Spleen (tissue), 13 donors: ENCODE measurements at regions of chr22 and their contacts with region 1.

Region 1: GRCh38 chr22:37199103-37199759 is 11.2 kb upstream of the C1QTNF6 start:
- DNase-seq: peak; percentile 100
- H3K4me3 ChIP-seq: peak overlapping the region; percentile 50 to 88 (median 58)
- H3K27ac ChIP-seq: peak overlapping the region; percentile 91 to 98 (median 96)
- H3K4me1 ChIP-seq: peaks cover 20 to 69% (median 50%) of the 10 kb centered on the region in 6 donors
- H3K27me3 ChIP-seq: no peaks in the 10 kb centered on the region
- CTCF ChIP-seq: peak; percentile 95 to 99 (median 98)
- POLR2A ChIP-seq: peak; percentile 44 to 97 (median 96)

Region 2: DNA sequence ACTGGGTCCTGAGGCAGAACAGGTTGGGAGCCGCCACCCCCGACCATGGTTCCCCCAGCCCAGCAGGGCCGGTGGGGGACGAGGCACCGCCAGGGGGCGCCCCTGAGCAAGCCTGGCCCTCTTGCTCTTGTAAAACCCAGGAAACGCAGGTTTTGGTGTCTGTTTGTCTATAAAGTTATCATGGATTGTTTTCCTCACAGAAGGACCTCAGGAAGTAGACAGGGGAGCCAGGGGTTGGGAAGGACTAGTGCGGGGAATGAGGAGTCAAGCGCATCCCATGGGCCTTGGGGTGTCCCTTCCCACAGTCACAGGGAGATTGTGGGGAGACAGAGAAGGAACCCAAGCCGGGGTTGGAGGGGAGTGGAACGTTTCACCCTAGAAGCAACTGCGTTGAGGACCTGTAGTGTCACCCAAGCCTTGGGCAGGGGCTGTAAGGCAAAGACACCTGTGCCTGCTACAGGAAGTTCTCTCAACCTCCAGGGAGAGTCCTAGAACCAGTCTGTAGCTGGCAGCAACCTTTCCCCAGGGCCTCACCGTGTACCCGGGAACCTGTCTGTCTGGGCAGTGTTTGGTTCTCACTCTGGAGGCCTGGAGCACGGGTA is 121.2 kb before region 1 on chr22:
- intact Hi-C with region 1: loop called (anchors 2 kb)
- DNase-seq: peak; percentile 93
- H3K4me3 ChIP-seq: no peak overlapping the region
- H3K27ac ChIP-seq: no peak overlapping the region
- H3K4me1 ChIP-seq: peaks cover 11 to 28% (median 23%) of the 10 kb centered on the region in 6 donors
- H3K27me3 ChIP-seq: peaks cover 0 to 45% (median 0%) of the 10 kb centered on the region in 7 donors
- CTCF ChIP-seq: peak; percentile 70 to 97 (median 94)
- POLR2A ChIP-seq: no peak

Region 3: GRCh38 chr22:37166675-37167066 is 32.6 kb before region 1 on chr22:
- intact Hi-C with region 1: loop called (anchors 2 kb)
- DNase-seq: peak; percentile 96
- H3K4me3 ChIP-seq: peak overlapping the region in 4 of 8 donors; percentile 17 to 61 (median 19)
- H3K27ac ChIP-seq: peak overlapping the region; percentile 1 to 87 (median 68)
- H3K4me1 ChIP-seq: peaks cover 13 to 88% (median 64%) of the 10 kb centered on the region in 6 donors
- H3K27me3 ChIP-seq: no peaks in the 10 kb centered on the region
- CTCF ChIP-seq: peak in 9 of 11 experiments; percentile 87 to 95 (median 93)
- POLR2A ChIP-seq: no peak

Region 4: GRCh38 chr22:37259540-37260029 is 60.4 kb after region 1 on chr22:
- intact Hi-C with region 1: no loop called
- DNase-seq: peak; percentile 73
- H3K4me3 ChIP-seq: no peak overlapping the region
- H3K27ac ChIP-seq: no peak overlapping the region
- H3K4me1 ChIP-seq: peaks cover 4 to 29% (median 22%) of the 10 kb centered on the region in 6 donors
- H3K27me3 ChIP-seq: peaks cover 0 to 35% (median 4%) of the 10 kb centered on the region in 7 donors
- CTCF ChIP-seq: peak in 8 of 11 experiments; percentile 25 to 61 (median 51)
- POLR2A ChIP-seq: no peak